Astrocyte of the cerebellum (primary cell): ENCODE measurements at regions of chr4 and their contacts with region 1.

Region 1: DNA sequence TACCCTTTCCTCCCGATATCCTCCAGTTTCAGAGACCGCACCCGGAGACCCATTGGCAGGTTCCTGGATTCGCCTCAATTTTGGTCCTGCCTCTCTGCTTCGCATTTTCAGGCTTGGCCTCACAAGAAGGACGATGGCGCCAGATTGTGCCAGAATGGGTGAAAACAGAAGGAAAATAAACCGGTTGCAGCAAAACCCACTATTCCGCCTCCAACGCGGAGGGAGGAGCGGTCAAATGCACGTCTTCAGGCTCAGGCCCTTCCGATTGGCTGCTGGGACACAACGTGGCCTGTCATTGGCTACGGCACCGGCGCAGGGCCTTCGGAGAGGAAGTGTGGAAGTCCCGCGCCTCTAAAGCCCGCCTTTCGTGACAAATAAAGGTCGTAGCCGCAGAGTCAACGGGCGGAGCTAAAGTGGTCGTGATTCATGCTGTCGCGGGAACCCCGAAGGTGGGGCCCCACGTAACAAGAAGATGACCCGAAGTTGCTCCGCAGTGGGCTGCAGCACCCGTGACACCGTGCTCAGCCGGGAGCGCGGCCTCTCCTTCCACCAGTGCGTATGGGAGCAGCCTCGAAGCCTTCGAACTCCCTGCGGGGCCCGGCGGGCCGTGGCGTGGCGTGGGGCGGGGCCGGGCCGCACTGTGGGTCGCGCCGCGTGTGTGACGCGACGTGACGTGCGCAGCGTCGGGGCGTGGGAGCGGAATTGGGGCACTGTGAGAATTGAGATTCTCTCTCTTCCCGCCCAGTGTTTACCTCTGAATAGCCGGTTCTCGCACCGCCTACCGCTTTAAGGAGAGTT is at the start of gene THAP9:
- DNase-seq: peak; percentile 99
- H3K4me3 ChIP-seq: peak within 1 kb of the TSS; percentile 72
- CTCF ChIP-seq: no peak

Region 2: DNA sequence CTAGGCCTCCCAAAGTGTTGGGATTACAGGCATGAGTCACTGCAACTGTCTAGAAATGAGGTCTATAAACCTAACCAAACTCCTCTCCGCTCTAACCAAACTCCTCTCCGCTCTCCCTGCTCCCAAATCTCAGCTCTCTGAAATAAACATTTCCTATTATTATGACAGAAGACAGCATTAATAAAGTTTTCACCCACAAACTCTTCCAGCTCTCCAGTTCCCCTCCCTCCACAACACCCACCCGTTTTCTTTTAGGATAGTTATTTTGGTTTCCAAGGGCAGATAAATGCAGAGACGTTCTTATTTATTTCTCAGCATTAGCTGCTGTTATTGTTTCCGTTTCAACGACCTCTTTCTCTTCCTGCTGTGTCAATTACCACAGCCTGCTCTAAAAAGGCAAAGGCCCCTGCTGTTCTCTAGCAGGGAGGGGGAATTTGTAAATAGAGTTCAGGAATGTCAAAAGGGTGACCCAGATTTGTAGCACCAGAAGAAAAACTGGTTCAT is 88.6 kb before region 1 on chr4:
- in situ Hi-C with region 1: no loop called
- DNase-seq: no peak
- H3K4me3 ChIP-seq: no peak overlapping the region
- CTCF ChIP-seq: no peak

Region 3: GRCh38 chr4:82842593-82842992 is 57.9 kb before region 1 on chr4:
- in situ Hi-C with region 1: no loop called
- DNase-seq: peak; percentile 8
- H3K4me3 ChIP-seq: no peak overlapping the region
- CTCF ChIP-seq: peak; percentile 59

Region 4: GRCh38 chr4:83009529-83009928 is 109.0 kb after region 1 on chr4:
- in situ Hi-C with region 1: loop called (anchors 5 kb)
- DNase-seq: no peak
- H3K4me3 ChIP-seq: peak overlapping the region; percentile 91
- CTCF ChIP-seq: no peak